Natural killer cell (primary cell): ENCODE measurements at regions of chr7 and their contacts with region 1.

Region 1: GRCh38 chr7:101244375-101245146 is at the start of gene FIS1:
- DNase-seq: peak; percentile 94 to 96
- ATAC-seq: peak; percentile 92 to 98 (median 93)
- H3K4me3 ChIP-seq: peak within 1 kb of the TSS; percentile 83
- H3K4me3 Mint-ChIP-seq: peak within 1 kb of the TSS; percentile 98
- H3K27ac ChIP-seq: peak within 1 kb of the TSS; percentile 89
- H3K27ac Mint-ChIP-seq: peak within 1 kb of the TSS; percentile 95 to 99
- H3K4me1 ChIP-seq: peaks cover 21% of the 10 kb centered on the region
- H3K4me1 Mint-ChIP-seq: peaks cover 22 to 33% of the 10 kb centered on the region in 2 donors
- H3K27me3 ChIP-seq: no peaks in the 10 kb centered on the region
- H3K27me3 Mint-ChIP-seq: no peaks in the 10 kb centered on the region
- CTCF ChIP-seq: peak; percentile 55
- total RNA-seq, gene FIS1: 99.9 to 119 (median 105) TPM

Region 2: DNA sequence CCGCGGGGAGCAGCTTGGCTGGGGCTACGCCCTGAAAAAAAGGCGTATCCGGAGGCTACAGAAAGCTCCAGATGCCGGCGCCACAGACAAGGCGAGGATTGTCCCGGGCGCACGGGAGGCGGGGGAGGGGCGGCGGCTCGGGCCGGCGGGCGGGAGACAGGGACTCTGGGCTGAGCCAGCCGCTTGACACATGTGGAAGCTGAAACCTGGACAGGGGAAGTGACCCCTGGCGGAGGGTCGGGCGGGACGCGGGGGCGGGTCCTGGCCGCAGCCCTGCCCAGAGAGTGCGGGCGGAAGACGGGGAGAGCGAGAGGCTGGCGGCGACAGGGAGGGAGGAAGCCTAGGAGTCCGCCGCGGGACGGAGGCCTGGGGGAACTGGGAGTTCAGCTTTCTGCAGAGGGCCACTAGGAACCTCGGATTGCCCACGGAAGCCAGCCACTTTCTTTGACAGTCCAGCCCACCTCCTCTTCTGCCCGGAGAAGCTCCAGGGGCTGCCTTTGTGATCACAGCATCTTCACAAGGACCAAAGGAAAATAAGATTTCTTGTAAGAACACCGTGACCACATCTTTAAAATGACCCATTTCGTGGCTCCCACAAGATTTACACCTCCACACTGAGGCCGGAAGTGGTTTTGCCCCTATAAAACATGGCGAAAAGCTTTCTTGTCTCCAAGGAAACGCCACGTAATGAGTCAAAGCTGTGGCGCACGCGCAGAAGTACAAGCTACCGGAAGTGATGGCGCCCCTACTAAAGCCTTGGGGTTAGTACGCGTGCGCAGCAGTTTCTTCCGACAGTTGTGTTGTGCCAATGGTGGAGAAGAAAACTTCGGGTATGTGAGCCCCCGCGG is 26.9 kb before region 1 on chr7 and contains the starts of genes PLOD3 and ZNHIT1:
- intact Hi-C with region 1: loop called (anchors 1 kb)
- DNase-seq: peak; percentile 94 to 100
- ATAC-seq: peak; percentile 76 to 84 (median 82)
- H3K4me3 ChIP-seq: peak within 1 kb of the TSS; percentile 81
- H3K4me3 Mint-ChIP-seq: peak within 1 kb of the TSS; percentile 96
- H3K27ac ChIP-seq: peak within 1 kb of the TSS; percentile 82
- H3K27ac Mint-ChIP-seq: peak within 1 kb of the TSS; percentile 94 to 97
- H3K4me1 ChIP-seq: peaks cover 25% of the 10 kb centered on the region
- H3K4me1 Mint-ChIP-seq: peaks cover 39 to 57% of the 10 kb centered on the region in 2 donors
- H3K27me3 ChIP-seq: no peaks in the 10 kb centered on the region
- H3K27me3 Mint-ChIP-seq: no peaks in the 10 kb centered on the region
- CTCF ChIP-seq: no peak
- total RNA-seq, gene PLOD3: 41.7 to 54.5 (median 45.0) TPM
- total RNA-seq, gene ZNHIT1: 53.7 to 63.5 (median 60.9) TPM

Region 3: DNA sequence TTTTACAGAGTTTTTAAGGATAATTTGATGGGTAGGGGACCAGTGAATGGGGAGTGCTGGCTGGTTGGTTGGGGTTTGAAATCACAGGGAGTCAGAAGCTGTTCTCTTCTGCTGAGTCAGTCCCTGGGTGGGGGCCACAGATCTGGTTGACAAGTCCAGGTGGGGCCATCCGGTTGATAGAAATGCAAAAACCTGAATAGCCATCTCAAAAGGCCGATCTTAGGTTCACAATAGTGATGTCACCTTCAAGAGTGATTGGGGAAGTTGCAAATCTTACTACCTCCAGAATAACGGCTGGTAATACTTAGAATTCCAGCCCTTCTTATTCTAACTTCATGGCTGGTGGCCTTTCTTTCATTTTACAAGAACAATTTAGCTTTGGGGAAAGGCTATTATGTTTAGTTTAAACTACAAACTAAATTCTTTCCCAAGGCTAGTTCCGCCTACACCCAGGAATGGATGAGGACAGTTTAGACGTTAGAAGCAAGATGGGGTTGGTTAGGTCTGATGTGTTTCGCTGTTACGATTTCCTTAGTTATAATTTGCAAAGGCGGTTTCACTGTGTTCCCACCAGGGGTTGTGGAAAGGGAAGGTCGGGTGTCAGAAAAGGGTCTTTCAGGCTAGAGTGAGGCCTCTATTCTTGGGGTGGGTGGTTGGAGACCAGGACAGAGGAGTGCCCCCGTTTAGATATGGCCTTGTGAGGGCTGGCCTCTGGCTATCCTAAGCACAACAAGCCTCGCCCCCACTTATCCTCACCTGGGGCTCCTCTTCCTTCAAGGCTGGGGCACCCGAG is 49.7 kb after region 1 on chr7:
- intact Hi-C with region 1: no loop called
- DNase-seq: no peak
- ATAC-seq: no peak
- H3K4me3 ChIP-seq: no peak overlapping the region
- H3K4me3 Mint-ChIP-seq: no peak overlapping the region
- H3K27ac ChIP-seq: no peak overlapping the region
- H3K27ac Mint-ChIP-seq: no peak overlapping the region
- H3K4me1 ChIP-seq: peaks cover 9% of the 10 kb centered on the region
- H3K4me1 Mint-ChIP-seq: peaks cover 8 to 13% of the 10 kb centered on the region in 2 donors
- H3K27me3 ChIP-seq: peaks cover 14% of the 10 kb centered on the region
- H3K27me3 Mint-ChIP-seq: peaks cover 31 to 33% of the 10 kb centered on the region in 2 donors
- CTCF ChIP-seq: no peak

Region 4: GRCh38 chr7:101321491-101322401 is 77.2 kb after region 1 on chr7 and contains the start of gene IFT22:
- intact Hi-C with region 1: loop called (anchors 1 kb)
- DNase-seq: peak; percentile 76 to 90
- ATAC-seq: peak; percentile 89 to 98 (median 97)
- H3K4me3 ChIP-seq: peak within 1 kb of the TSS; percentile 63
- H3K4me3 Mint-ChIP-seq: peak within 1 kb of the TSS; percentile 90
- H3K27ac ChIP-seq: peak within 1 kb of the TSS; percentile 48
- H3K27ac Mint-ChIP-seq: peak within 1 kb of the TSS; percentile 81 to 92
- H3K4me1 ChIP-seq: peaks cover 13% of the 10 kb centered on the region
- H3K4me1 Mint-ChIP-seq: peaks cover 10 to 16% of the 10 kb centered on the region in 2 donors
- H3K27me3 ChIP-seq: no peaks in the 10 kb centered on the region
- H3K27me3 Mint-ChIP-seq: peaks cover 0 to under 1% of the 10 kb centered on the region in 2 donors
- CTCF ChIP-seq: no peak
- total RNA-seq, gene IFT22: 2.9 to 3.8 (median 3.7) TPM